ENCODE measurements at regions of chr16 and their contacts with region 1.

Region 1: GRCh38 chr16:86414991-86415740 is 95.2 kb upstream of the FOXF1 start:
- DNase-seq: peak; percentile 85
- H3K4me3 ChIP-seq: peak overlapping the region in 1 of 3 experiments; percentile 23
- H3K27ac ChIP-seq: peak overlapping the region; percentile 71
- H3K4me1 ChIP-seq: peaks cover 11% of the 10 kb centered on the region
- H3K27me3 ChIP-seq: peaks cover 0 to 1% of the 10 kb centered on the region in 2 experiments
- CTCF ChIP-seq: no peak
- POLR2A ChIP-seq: no peak

Region 2: DNA sequence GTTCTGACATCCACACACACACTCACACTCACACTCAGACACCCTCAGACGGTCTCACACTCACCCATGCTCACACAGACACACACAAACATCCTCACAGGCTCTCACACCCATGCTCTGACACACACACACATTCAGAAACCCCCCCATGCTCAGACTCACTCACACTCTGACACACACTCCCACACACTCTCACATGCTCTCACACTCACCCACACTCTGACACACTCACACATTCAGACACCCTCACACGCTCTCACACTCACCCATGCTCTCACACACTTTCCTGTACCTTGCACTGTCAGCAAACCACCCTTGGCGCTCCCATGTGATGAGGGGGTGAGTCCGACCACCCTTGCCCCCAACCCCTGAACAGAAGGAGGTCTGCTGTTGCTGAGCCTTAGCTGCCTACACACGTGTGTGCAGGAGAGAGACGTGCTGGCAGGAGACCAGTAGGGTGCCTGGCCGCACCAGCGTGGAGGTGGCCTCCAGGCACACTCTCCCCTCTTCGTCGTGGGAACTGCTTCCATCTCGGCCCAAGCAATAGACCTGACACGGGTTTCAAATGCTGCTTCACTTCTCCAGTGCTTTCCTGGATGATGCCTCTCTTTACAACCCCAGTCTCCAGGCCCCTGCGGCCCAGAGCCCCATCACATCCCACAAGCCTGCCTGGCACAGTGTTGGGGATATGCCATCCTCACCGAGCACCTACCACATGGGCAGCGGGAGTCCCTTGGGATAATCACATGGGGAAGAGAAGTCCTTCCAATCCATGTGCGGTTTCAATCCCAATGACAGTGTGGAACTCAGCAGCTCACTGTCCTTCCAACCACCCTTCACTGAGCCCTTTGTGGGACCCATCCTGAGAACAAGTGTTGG is 172.7 kb before region 1 on chr16:
- CTCF ChIA-PET with region 1: no interaction called
- POLR2A ChIA-PET with region 1: no interaction called
- dilution Hi-C with region 1: no loop called
- intact Hi-C with region 1: no loop called
- DNase-seq: no peak
- H3K4me3 ChIP-seq: no peak overlapping the region
- H3K27ac ChIP-seq: no peak overlapping the region
- H3K4me1 ChIP-seq: no peaks in the 10 kb centered on the region
- H3K27me3 ChIP-seq: peaks cover 17 to 21% of the 10 kb centered on the region in 2 experiments
- CTCF ChIP-seq: no peak
- POLR2A ChIP-seq: no peak

Region 3: GRCh38 chr16:86277221-86277620 is 137.9 kb before region 1 on chr16:
- CTCF ChIA-PET with region 1: no interaction called
- POLR2A ChIA-PET with region 1: no interaction called
- dilution Hi-C with region 1: no loop called
- intact Hi-C with region 1: no loop called
- DNase-seq: no peak
- H3K4me3 ChIP-seq: no peak overlapping the region
- H3K27ac ChIP-seq: no peak overlapping the region
- H3K4me1 ChIP-seq: no peaks in the 10 kb centered on the region
- H3K27me3 ChIP-seq: peaks cover 0 to 21% of the 10 kb centered on the region in 2 experiments
- CTCF ChIP-seq: no peak
- POLR2A ChIP-seq: no peak

Region 4: GRCh38 chr16:86396897-86397296 is 18.3 kb before region 1 on chr16:
- CTCF ChIA-PET with region 1: interaction called, 3 read pairs
- POLR2A ChIA-PET with region 1: interaction called, 3 read pairs
- dilution Hi-C with region 1: no loop called
- intact Hi-C with region 1: loop called (anchors 2 kb)
- DNase-seq: peak; percentile 86
- H3K4me3 ChIP-seq: no peak overlapping the region
- H3K27ac ChIP-seq: peak overlapping the region; percentile 84
- H3K4me1 ChIP-seq: peaks cover 46% of the 10 kb centered on the region
- H3K27me3 ChIP-seq: no peaks in the 10 kb centered on the region
- CTCF ChIP-seq: no peak
- POLR2A ChIP-seq: no peak

Region 5: GRCh38 chr16:86403541-86404163 is 11.5 kb before region 1 on chr16:
- CTCF ChIA-PET with region 1: interaction called, 10 read pairs
- POLR2A ChIA-PET with region 1: no interaction called
- dilution Hi-C with region 1: no loop called
- intact Hi-C with region 1: loop called (anchors 1 kb)
- DNase-seq: no peak
- H3K4me3 ChIP-seq: no peak overlapping the region
- H3K27ac ChIP-seq: no peak overlapping the region
- H3K4me1 ChIP-seq: peaks cover 24% of the 10 kb centered on the region
- H3K27me3 ChIP-seq: no peaks in the 10 kb centered on the region
- CTCF ChIP-seq: no peak
- POLR2A ChIP-seq: no peak

Region 6: GRCh38 chr16:86457501-86458148 is 42.5 kb after region 1 on chr16:
- CTCF ChIA-PET with region 1: no interaction called
- POLR2A ChIA-PET with region 1: no interaction called
- dilution Hi-C with region 1: no loop called
- intact Hi-C with region 1: no loop called
- DNase-seq: no peak
- H3K4me3 ChIP-seq: no peak overlapping the region
- H3K27ac ChIP-seq: no peak overlapping the region
- H3K4me1 ChIP-seq: no peaks in the 10 kb centered on the region
- H3K27me3 ChIP-seq: peaks cover 24 to 31% of the 10 kb centered on the region in 2 experiments
- CTCF ChIP-seq: no peak
- POLR2A ChIP-seq: no peak